Posterior vena cava (tissue), 2 donors: ENCODE measurements at regions of chr11 and their contacts with region 1.

Region 1: GRCh38 chr11:96267496-96268032 is 75.4 kb downstream of the MAML2 start:
- DNase-seq: no peak

Region 2: DNA sequence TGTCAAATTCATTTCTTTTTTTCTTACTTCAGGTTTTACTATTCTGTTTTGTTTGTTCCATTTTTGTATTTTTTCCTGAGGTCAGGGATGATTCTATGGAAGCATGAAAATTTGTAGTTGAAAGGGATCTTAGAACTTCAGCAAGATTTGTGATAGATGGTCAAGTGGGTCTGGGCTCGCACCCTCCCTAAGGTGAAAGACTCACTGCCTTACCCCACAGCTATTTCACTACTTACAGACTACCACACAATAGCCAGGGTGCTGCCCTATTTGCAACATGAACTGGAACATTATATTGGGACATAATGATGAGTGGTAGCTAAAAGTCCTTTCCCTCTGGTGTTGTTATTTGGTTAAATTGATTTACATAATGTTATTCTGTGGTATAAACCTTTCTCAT is 12.9 kb after region 1 on chr11:
- intact Hi-C with region 1: loop called in 1 of 2 experiments (anchors 2 kb)
- DNase-seq: no peak

Region 3: DNA sequence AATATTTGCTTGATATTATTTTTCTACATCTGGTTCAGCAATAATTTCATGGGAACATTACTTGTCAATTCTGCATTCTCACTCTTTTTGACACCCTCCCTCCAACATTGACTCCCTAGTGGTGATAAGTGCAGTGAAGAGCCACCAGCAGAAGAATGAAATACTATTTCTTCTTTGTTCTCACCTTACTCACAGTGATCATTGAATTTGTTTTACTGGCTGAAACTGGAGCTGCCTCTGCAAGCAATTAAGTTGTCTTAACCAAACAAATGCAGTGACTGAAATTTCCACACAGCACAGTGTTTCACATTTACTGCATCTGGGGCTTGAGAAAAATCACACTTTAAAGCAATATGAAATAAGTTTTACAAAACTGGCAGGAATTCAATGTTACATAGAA is 312.1 kb after region 1 on chr11:
- intact Hi-C with region 1: no loop called
- DNase-seq: no peak